ENCODE measurements at regions of chr5 and their contacts with region 1.

Region 1: GRCh38 chr5:141524604-141525597 is 36.0 kb downstream of the PCDHGC5 start:
- DNase-seq: peak; percentile 78
- ATAC-seq: peak; percentile 89
- H3K4me3 ChIP-seq: no peak overlapping the region
- H3K4me3 Mint-ChIP-seq: no peak overlapping the region
- H3K27ac ChIP-seq: no peak overlapping the region
- H3K27ac Mint-ChIP-seq: peak overlapping the region; percentile 67
- H3K4me1 ChIP-seq: peaks cover 9 to 10% of the 10 kb centered on the region in 2 donors
- H3K4me1 Mint-ChIP-seq: peaks cover 18% of the 10 kb centered on the region
- H3K27me3 ChIP-seq: no peaks in the 10 kb centered on the region
- H3K27me3 Mint-ChIP-seq: no peaks in the 10 kb centered on the region
- CTCF ChIP-seq: peak; percentile 100

Region 2: DNA sequence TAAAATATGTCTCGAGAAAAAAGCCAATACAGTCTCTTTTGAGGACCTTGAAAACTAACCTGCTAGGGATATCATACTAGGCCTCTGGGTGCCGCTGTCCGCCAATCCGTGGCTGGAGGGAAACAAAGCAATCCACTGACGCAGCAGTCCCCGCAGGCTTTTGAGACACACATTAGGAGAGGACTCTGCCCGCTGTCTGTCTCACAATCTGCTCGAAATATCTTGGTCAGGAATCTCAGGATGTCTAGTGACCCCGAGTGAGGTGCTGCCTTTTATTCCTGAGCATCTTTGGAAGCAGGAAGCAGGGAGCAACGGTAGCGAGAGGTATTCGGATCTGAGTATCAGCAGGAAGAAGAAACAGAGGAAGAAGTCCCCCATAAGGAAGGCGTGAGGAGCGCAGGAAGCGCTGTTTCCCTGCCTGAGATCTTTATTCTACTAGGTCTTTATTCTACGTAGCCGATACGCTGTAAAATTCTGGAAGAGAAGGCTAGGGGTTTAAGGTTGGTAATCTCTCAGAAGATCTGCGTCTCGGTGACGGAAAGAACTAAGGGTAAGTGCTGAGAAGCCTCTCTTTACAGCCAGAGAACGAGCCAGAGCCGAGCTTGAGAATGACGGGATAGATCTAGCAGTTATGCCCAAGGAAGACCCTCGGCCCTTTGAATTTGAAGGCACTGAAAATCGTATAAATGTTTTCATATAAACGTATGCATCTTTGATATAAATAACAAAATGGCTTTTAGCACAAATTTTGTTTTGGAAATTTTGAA is 198.6 kb before region 1 on chr5:
- CTCF ChIA-PET with region 1: interaction called, 19 read pairs
- POLR2A ChIA-PET with region 1: no interaction called
- intact Hi-C with region 1: loop called (anchors 1 kb)
- DNase-seq: peak; percentile 72
- ATAC-seq: peak; percentile 90
- H3K4me3 ChIP-seq: peak overlapping the region; percentile 35 to 59 (median 51)
- H3K4me3 Mint-ChIP-seq: peak overlapping the region; percentile 94
- H3K27ac ChIP-seq: peak overlapping the region in 1 of 2 donors; percentile 26
- H3K27ac Mint-ChIP-seq: peak overlapping the region; percentile 89
- H3K4me1 ChIP-seq: peaks cover 6 to 10% of the 10 kb centered on the region in 2 donors
- H3K4me1 Mint-ChIP-seq: peaks cover 9% of the 10 kb centered on the region
- H3K27me3 ChIP-seq: peaks cover 0 to 30% (median 12%) of the 10 kb centered on the region in 4 experiments
- H3K27me3 Mint-ChIP-seq: peaks cover 41% of the 10 kb centered on the region
- CTCF ChIP-seq: peak; percentile 69

Region 3: GRCh38 chr5:141412854-141413539 is 111.9 kb before region 1 on chr5 and contains the start of gene PCDHGA10:
- CTCF ChIA-PET with region 1: interaction called, 24 read pairs
- POLR2A ChIA-PET with region 1: no interaction called
- intact Hi-C with region 1: loop called (anchors 1 kb)
- DNase-seq: peak; percentile 65
- ATAC-seq: peak; percentile 68
- H3K4me3 ChIP-seq: peak within 1 kb of the TSS; percentile 5 to 63 (median 45)
- H3K4me3 Mint-ChIP-seq: peak within 1 kb of the TSS; percentile 87
- H3K27ac ChIP-seq: no peak within 1 kb of the TSS
- H3K27ac Mint-ChIP-seq: peak within 1 kb of the TSS; percentile 17
- H3K4me1 ChIP-seq: peaks cover 11 to 15% of the 10 kb centered on the region in 2 donors
- H3K4me1 Mint-ChIP-seq: peaks cover 18% of the 10 kb centered on the region
- H3K27me3 ChIP-seq: peaks cover 0 to 69% (median 55%) of the 10 kb centered on the region in 4 experiments
- H3K27me3 Mint-ChIP-seq: peaks cover 59% of the 10 kb centered on the region
- CTCF ChIP-seq: peak; percentile 82
- total RNA-seq, gene PCDHGA10: 1.9 and 2.0 TPM in 2 replicates

Region 4: DNA sequence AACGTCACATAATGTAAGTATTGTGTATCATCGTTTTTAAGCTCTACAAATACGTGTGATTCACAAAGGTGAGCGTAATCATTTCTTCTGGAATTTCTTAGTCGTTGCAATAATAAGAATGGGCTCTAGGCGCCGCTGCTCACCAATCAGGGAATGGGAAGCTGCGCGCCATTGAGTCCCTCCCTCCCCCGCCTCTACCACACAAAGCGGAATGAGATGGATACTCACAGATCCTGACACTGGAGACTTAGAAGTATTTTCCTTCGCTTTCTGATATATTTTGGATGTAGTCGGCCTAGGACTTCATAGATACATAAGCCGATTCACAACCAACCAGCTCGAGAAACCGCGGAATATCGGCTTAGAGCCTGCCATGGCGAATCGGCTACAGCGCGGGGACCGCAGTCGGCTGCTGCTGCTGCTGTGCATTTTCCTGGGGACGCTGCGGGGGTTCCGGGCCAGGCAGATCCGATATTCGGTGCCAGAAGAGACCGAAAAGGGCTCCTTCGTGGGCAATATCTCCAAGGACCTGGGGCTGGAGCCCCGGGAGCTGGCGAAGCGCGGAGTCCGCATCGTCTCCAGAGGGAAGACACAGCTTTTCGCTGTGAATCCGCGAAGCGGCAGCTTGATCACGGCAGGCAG is 103.9 kb before region 1 on chr5 and contains the start of gene PCDHGA11:
- CTCF ChIA-PET with region 1: interaction called, 32 read pairs
- POLR2A ChIA-PET with region 1: no interaction called
- intact Hi-C with region 1: no loop called
- DNase-seq: peak; percentile 68
- ATAC-seq: peak; percentile 68
- H3K4me3 ChIP-seq: peak within 1 kb of the TSS; percentile 24 to 53 (median 52)
- H3K4me3 Mint-ChIP-seq: peak within 1 kb of the TSS; percentile 87
- H3K27ac ChIP-seq: no peak within 1 kb of the TSS
- H3K27ac Mint-ChIP-seq: peak within 1 kb of the TSS; percentile 48
- H3K4me1 ChIP-seq: peaks cover 10 to 12% of the 10 kb centered on the region in 2 donors
- H3K4me1 Mint-ChIP-seq: peaks cover 15% of the 10 kb centered on the region
- H3K27me3 ChIP-seq: peaks cover 2 to 71% (median 58%) of the 10 kb centered on the region in 4 experiments
- H3K27me3 Mint-ChIP-seq: peaks cover 57% of the 10 kb centered on the region
- CTCF ChIP-seq: peak; percentile 72
- total RNA-seq, gene PCDHGA11: 1.5 and 1.8 TPM in 2 replicates

Region 5: GRCh38 chr5:141430332-141431113 is 94.4 kb before region 1 on chr5 and contains the start of gene PCDHGA12:
- CTCF ChIA-PET with region 1: interaction called, 68 read pairs
- POLR2A ChIA-PET with region 1: no interaction called
- intact Hi-C with region 1: loop called (anchors 1 kb)
- DNase-seq: peak; percentile 65
- ATAC-seq: peak; percentile 82
- H3K4me3 ChIP-seq: peak within 1 kb of the TSS in 4 of 5 experiments; percentile 30 to 35 (median 32)
- H3K4me3 Mint-ChIP-seq: peak within 1 kb of the TSS; percentile 86
- H3K27ac ChIP-seq: no peak within 1 kb of the TSS
- H3K27ac Mint-ChIP-seq: peak within 1 kb of the TSS; percentile 29
- H3K4me1 ChIP-seq: peaks cover 15 to 17% of the 10 kb centered on the region in 2 donors
- H3K4me1 Mint-ChIP-seq: peaks cover 7% of the 10 kb centered on the region
- H3K27me3 ChIP-seq: peaks cover 0 to 57% (median 30%) of the 10 kb centered on the region in 4 experiments
- H3K27me3 Mint-ChIP-seq: peaks cover 46% of the 10 kb centered on the region
- CTCF ChIP-seq: peak; percentile 68
- total RNA-seq, gene PCDHGA12: 1.6 and 2.8 TPM in 2 replicates

Region 6: GRCh38 chr5:141475625-141476131 is 49.2 kb before region 1 on chr5 and contains the start of gene PCDHGC3:
- CTCF ChIA-PET with region 1: interaction called, 65 read pairs
- POLR2A ChIA-PET with region 1: no interaction called
- intact Hi-C with region 1: loop called (anchors 1 kb)
- DNase-seq: peak; percentile 65
- ATAC-seq: peak; percentile 95
- H3K4me3 ChIP-seq: peak within 1 kb of the TSS; percentile 35 to 64 (median 49)
- H3K4me3 Mint-ChIP-seq: peak within 1 kb of the TSS; percentile 95
- H3K27ac ChIP-seq: no peak within 1 kb of the TSS
- H3K27ac Mint-ChIP-seq: peak within 1 kb of the TSS; percentile 47
- H3K4me1 ChIP-seq: peaks cover 23 to 32% of the 10 kb centered on the region in 2 donors
- H3K4me1 Mint-ChIP-seq: peaks cover 29% of the 10 kb centered on the region
- H3K27me3 ChIP-seq: peaks cover 0 to 47% (median 30%) of the 10 kb centered on the region in 4 experiments
- H3K27me3 Mint-ChIP-seq: peaks cover 36% of the 10 kb centered on the region
- CTCF ChIP-seq: no peak
- total RNA-seq, gene PCDHGC3: 1.9 and 2.0 TPM in 2 replicates

Region 7: DNA sequence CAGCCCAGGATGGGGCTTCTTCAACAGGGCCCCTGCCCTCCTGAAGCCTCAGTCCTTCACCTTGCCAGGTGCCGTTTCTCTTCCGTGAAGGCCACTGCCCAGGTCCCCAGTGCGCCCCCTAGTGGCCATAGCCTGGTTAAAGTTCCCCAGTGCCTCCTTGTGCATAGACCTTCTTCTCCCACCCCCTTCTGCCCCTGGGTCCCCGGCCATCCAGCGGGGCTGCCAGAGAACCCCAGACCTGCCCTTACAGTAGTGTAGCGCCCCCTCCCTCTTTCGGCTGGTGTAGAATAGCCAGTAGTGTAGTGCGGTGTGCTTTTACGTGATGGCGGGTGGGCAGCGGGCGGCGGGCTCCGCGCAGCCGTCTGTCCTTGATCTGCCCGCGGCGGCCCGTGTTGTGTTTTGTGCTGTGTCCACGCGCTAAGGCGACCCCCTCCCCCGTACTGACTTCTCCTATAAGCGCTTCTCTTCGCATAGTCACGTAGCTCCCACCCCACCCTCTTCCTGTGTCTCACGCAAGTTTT is 12.5 kb before region 1 on chr5:
- CTCF ChIA-PET with region 1: interaction called, 176 read pairs
- POLR2A ChIA-PET with region 1: no interaction called
- intact Hi-C with region 1: loop called (anchors 1 kb)
- DNase-seq: peak; percentile 77
- ATAC-seq: peak; percentile 7
- H3K4me3 ChIP-seq: peak overlapping the region; percentile 31 to 74 (median 60)
- H3K4me3 Mint-ChIP-seq: peak overlapping the region; percentile 92
- H3K27ac ChIP-seq: peak overlapping the region in 1 of 2 donors; percentile 0
- H3K27ac Mint-ChIP-seq: peak overlapping the region; percentile 56
- H3K4me1 ChIP-seq: peaks cover 58 to 89% of the 10 kb centered on the region in 2 donors
- H3K4me1 Mint-ChIP-seq: peaks cover 85% of the 10 kb centered on the region
- H3K27me3 ChIP-seq: no peaks in the 10 kb centered on the region
- H3K27me3 Mint-ChIP-seq: no peaks in the 10 kb centered on the region
- CTCF ChIP-seq: peak; percentile 85